Activated CD4-positive, alpha-beta memory T cell treated with anti-CD3 and anti-CD28 coated beads for 36 hours (primary cell): ENCODE measurements at regions of chr14 and their contacts with region 1.

Region 1: DNA sequence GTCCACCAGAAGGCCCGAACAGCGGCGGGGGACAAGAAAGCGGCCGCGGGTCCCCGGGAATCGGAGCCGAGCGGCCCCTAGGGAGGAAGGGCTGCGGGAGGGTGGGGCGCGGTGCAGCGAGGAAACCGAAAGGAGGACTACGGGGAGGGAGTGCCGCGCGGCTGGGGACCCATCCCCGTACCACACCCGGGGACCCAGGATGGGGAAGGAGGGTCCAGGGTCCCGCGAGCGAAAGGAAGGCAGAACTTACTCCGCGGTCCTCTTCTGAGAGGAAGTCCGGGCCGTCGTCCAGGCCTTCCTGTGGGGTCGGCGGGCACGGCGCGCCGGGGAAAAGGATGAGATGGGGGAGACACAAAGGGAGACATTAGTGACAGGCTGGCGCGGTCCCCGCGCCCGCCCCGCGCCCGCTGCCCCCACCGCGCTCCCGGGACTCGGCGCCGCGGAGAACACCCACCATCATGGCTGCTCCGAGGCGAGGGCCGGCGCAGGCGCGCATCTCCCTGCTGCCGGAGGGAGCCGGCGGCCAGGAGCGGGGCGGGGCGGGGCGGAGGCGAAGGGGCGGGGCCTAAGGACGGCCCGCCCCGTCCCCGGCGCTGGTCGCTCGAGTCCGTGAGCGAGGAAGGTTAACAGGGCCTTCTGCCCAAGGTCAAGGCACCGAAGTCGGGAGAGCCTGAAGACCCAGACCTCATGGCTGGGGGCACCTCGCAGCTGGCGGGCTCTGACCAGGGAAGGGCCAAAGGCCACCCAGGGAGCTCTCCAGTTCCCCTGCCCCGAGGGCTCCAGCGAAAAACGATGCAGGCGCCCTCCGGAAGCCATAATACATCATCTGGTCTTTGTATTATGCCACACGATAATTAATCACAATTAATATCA is at the start of gene SNX6:
- DNase-seq: peak; percentile 89
- H3K4me3 Mint-ChIP-seq: peak within 1 kb of the TSS; percentile 90
- H3K27ac Mint-ChIP-seq: peak within 1 kb of the TSS; percentile 87
- H3K4me1 Mint-ChIP-seq: peaks cover 29% of the 10 kb centered on the region
- H3K27me3 Mint-ChIP-seq: peaks cover 2% of the 10 kb centered on the region
- total RNA-seq, gene SNX6: 82.0 to 86.9 TPM

Region 2: DNA sequence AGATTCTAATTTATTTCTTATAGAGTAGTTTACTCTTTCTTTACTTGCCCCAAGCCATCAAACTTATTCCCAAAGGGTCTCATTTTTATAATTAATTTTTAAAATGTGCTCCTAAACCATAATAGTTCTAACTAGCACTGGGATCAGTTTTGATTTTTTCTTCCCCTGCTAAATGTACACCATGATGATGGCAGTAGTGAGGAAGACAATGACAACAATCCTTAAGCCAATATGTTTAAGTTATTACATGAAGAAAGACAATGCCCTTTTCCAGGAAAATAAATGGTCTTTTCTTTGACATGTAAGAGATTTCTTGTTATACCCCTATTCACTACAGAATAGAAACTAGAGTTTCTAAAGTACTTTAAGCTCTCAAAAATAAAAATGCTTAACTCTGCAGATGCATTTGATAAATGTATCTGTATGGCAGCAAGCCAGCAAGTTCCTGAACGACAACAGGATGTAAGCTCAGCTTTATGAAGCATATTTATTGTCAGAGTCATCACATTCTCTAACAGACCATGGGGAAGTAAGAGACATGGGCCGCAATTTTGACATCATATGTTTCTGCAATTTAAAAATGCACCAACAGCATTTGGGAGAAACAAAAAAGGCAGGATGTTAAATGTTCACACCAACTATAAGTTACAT is 36.0 kb after region 1 on chr14:
- CTCF ChIA-PET with region 1: no interaction called
- POLR2A ChIA-PET with region 1: no interaction called
- intact Hi-C with region 1: loop called (anchors 2 kb)
- DNase-seq: peak; percentile 32
- H3K4me3 Mint-ChIP-seq: peak overlapping the region; percentile 18
- H3K27ac Mint-ChIP-seq: peak overlapping the region; percentile 86
- H3K4me1 Mint-ChIP-seq: peaks cover 15% of the 10 kb centered on the region
- H3K27me3 Mint-ChIP-seq: no peaks in the 10 kb centered on the region